CD8-positive, alpha-beta memory T cell (primary cell): ENCODE measurements at regions of chr4 and their contacts with region 1.

Region 1: GRCh38 chr4:152500800-152501434 is 35.0 kb downstream of the FBXW7 start:
- DNase-seq: peak; percentile 15 to 73 (median 63)
- H3K4me3 ChIP-seq: no peak overlapping the region
- H3K4me3 Mint-ChIP-seq: no peak overlapping the region
- H3K27ac ChIP-seq: no peak overlapping the region
- H3K27ac Mint-ChIP-seq: peak overlapping the region in 3 of 8 donors; percentile 8 to 54 (median 18)
- H3K4me1 ChIP-seq: peaks cover 5% of the 10 kb centered on the region
- H3K4me1 Mint-ChIP-seq: peaks cover 27 to 63% (median 54%) of the 10 kb centered on the region in 3 donors
- H3K27me3 ChIP-seq: no peaks in the 10 kb centered on the region
- H3K27me3 Mint-ChIP-seq: no peaks in the 10 kb centered on the region

Region 2: DNA sequence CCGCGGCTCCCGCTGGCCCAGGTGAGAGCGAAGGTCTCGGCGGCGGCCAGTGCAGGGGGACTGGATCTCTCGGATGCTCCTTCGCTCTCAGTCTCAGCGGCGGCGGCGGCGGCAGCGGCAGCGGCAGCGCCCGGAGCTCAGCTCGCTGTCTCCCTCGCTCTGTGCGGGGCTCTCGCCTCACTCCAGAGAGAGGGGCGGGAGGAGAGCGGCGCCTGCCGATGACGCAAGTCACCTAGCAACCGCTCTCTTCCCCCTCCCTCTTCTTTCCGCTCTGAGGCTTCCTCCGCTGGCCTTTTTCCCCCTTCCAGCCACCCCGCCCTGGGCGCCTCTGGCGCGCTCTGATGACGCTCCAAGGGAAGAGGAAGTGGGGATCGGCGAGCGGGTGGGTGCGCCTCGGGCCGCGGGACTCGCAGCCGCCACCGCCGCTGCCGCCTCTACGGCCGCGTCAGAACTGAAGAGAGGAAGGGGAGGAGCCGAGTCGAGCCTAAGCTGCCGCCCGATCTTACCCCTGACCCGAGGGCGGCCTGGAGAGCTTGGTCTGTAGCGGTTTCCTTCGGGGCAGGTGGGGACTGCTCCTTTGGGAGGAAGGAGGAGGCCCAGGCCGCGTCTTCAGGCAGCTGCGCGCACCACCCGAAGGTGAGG is 35.1 kb after region 1 on chr4 and contains the start of gene FBXW7:
- CTCF ChIA-PET with region 1: interaction called, 40 read pairs
- POLR2A ChIA-PET with region 1: interaction called, 14 read pairs
- DNase-seq: peak; percentile 98 to 100 (median 100)
- H3K4me3 ChIP-seq: peak within 1 kb of the TSS; percentile 94
- H3K4me3 Mint-ChIP-seq: peak within 1 kb of the TSS; percentile 89 to 98 (median 96)
- H3K27ac ChIP-seq: peak within 1 kb of the TSS; percentile 98
- H3K27ac Mint-ChIP-seq: peak within 1 kb of the TSS; percentile 96 to 100 (median 99)
- H3K4me1 ChIP-seq: peaks cover 52% of the 10 kb centered on the region
- H3K4me1 Mint-ChIP-seq: peaks cover 68 to 75% (median 73%) of the 10 kb centered on the region in 3 donors
- H3K27me3 ChIP-seq: no peaks in the 10 kb centered on the region
- H3K27me3 Mint-ChIP-seq: peaks cover 0 to 7% of the 10 kb centered on the region in 2 donors
- total RNA-seq, gene FBXW7: 46.6 to 54.3 TPM

Region 3: DNA sequence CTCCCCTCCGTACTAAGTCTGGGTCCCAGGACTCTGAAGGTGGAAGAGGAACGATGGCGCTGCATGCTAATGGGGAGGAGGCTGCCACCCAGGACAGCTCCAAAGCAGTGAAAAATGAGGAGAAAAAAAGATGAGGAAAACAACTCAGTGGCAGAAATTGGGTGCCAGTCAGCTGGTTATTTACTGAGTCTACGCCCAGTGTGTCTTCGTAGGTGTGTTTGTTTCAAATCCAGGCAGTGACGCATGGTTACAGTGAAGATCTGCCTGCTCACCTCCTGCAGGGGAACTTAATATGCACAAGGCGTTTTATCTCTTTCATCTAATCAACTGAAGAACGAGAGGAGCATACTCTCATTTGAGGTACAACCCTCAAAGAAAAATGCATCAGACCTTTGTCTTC is 105.8 kb after region 1 on chr4:
- CTCF ChIA-PET with region 1: interaction called, 14 read pairs
- POLR2A ChIA-PET with region 1: no interaction called
- DNase-seq: no peak
- H3K4me3 ChIP-seq: no peak overlapping the region
- H3K4me3 Mint-ChIP-seq: no peak overlapping the region
- H3K27ac ChIP-seq: no peak overlapping the region
- H3K27ac Mint-ChIP-seq: peak overlapping the region in 3 of 8 donors; percentile 45 to 84 (median 76)
- H3K4me1 ChIP-seq: no peaks in the 10 kb centered on the region
- H3K4me1 Mint-ChIP-seq: peaks cover 0 to 8% (median 0%) of the 10 kb centered on the region in 3 donors
- H3K27me3 ChIP-seq: no peaks in the 10 kb centered on the region
- H3K27me3 Mint-ChIP-seq: peaks cover 0 to 1% of the 10 kb centered on the region in 2 donors

Region 4: DNA sequence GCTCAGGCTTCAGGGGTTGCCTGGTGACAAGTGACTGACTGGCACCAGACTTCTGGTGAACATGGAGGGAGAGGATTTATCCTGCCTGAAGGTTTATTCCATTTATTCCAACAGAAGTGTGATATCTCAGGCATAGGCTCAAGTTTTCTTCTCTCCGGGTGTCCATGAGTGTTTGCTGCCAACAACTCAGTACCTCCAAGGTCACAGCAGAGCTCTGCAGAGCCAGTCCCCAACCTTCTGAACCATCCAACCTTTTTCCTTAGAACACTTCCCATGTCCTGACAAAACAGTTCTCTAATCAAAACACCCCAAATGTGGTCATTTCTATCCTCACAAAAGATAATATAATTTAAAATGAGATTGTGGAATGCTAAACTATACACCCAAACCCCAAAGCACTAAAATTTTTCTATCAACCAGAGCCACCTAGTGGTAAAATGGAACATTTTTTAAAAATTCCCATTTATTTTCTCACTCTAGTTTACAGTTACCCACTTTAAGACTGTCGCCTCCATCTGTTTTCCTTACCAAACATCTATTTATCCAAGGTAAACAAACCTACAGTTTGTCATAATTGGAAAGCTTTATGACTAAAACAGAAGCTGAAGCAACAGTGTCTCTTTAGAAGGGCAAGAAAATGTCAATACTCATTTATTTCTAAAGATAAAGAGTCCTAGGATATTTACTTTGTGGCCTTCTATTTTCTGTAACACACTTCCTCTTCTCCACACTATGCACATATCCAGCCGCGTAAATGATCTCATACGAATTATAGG is 139.3 kb after region 1 on chr4:
- CTCF ChIA-PET with region 1: interaction called, 172 read pairs
- POLR2A ChIA-PET with region 1: interaction called, 5 read pairs
- DNase-seq: peak in 2 of 5 donors; percentile 12 to 29
- H3K4me3 ChIP-seq: no peak overlapping the region
- H3K4me3 Mint-ChIP-seq: no peak overlapping the region
- H3K27ac ChIP-seq: no peak overlapping the region
- H3K27ac Mint-ChIP-seq: peak overlapping the region in 1 of 8 donors; percentile 48
- H3K4me1 ChIP-seq: peaks cover 9% of the 10 kb centered on the region
- H3K4me1 Mint-ChIP-seq: peaks cover 18 to 26% (median 24%) of the 10 kb centered on the region in 3 donors
- H3K27me3 ChIP-seq: no peaks in the 10 kb centered on the region
- H3K27me3 Mint-ChIP-seq: no peaks in the 10 kb centered on the region